ENCODE measurements at regions of chr2 and their contacts with region 1.

Region 1: GRCh38 chr2:36568516-36569246 is 29.3 kb downstream of the FEZ2 start:
- DNase-seq: peak; percentile 95
- H3K4me3 ChIP-seq: peak overlapping the region in 1 of 3 experiments; percentile 42
- H3K27ac ChIP-seq: peak overlapping the region; percentile 98
- H3K4me1 ChIP-seq: peaks cover 91% of the 10 kb centered on the region
- H3K27me3 ChIP-seq: no peaks in the 10 kb centered on the region
- CTCF ChIP-seq: no peak
- POLR2A ChIP-seq: peak; percentile 61

Region 2: DNA sequence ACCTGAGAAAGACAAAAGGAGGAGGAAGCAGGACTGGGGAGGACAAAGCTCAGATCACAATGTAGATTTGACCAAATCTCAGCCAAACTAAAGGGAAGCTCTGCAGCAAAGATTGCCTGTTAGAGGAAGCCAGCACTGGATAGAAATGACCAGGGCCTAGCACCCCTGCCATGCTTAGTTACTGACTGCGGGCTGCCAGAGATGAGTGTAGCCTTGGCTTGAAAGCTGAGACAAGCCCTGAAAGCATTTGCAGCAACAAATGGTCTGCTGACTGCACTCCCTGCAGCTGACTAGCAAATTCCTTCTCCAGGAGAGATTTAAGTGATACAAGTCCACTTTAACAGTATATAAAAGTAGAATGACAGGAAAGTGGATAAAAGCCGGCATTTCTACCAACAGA is 354.0 kb before region 1 on chr2:
- CTCF ChIA-PET with region 1: no interaction called
- POLR2A ChIA-PET with region 1: no interaction called
- dilution Hi-C with region 1: no loop called
- intact Hi-C with region 1: no loop called
- DNase-seq: no peak
- H3K4me3 ChIP-seq: no peak overlapping the region
- H3K27ac ChIP-seq: no peak overlapping the region
- H3K4me1 ChIP-seq: no peaks in the 10 kb centered on the region
- H3K27me3 ChIP-seq: peaks cover 0 to 2% of the 10 kb centered on the region in 2 experiments
- CTCF ChIP-seq: no peak
- POLR2A ChIP-seq: no peak

Region 3: DNA sequence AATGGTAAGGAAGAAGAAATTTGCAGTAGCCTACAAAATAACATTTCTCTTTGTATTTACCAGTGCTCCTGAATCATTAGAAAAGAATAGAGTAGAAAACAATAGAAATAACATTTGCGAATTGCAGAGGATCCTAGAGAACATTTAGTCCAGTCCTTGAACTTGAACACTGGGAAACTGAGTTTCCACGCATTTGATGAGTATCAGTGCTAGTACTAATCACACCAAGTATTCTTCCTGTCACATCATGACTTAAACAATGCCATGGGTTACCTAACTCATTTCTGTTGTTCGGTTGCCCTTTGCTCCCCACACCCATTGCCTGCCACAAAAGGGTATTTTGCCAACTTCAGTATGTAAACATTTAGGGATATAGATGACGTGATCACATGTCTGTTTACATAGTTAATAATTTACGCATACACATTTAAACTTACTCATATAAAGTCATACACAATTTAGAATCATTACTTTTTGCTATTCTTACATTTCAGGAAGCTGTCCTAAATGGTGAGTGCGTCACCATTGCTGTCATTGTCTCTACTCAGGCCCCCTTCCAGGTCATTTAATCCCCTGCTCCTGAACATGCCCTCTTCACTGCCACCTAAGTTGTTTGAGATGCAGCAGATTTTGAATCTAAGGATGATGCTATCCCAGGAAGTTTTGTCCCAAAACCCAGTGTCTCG is 170.8 kb before region 1 on chr2:
- CTCF ChIA-PET with region 1: no interaction called
- POLR2A ChIA-PET with region 1: no interaction called
- dilution Hi-C with region 1: no loop called
- intact Hi-C with region 1: no loop called
- DNase-seq: no peak
- H3K4me3 ChIP-seq: no peak overlapping the region
- H3K27ac ChIP-seq: peak overlapping the region; percentile 70
- H3K4me1 ChIP-seq: peaks cover 93% of the 10 kb centered on the region
- H3K27me3 ChIP-seq: no peaks in the 10 kb centered on the region
- CTCF ChIP-seq: no peak
- POLR2A ChIP-seq: peak; percentile 55

Region 4: DNA sequence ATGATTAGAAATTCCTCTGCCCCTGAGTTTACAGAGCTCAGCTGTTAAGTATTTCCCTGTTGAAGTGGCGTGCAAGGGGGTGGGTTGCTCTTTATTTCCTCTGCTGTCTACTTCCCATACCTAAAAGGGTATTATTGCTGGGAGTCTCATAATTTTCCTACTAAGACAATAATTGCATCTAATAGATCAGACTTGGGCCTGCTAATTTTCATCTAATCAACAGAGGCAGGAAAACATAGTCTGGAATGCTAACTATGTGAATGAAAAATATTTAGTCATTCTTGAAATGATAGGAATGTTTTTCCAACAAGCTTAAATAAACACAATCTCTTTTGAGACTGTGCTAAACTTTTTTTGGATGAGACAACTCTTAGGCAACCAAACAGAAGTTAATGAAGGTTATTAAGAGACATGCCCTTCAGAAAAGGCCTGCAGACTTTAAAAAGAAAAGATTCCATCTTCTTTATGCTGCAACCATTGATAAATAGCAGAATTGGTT is 82.1 kb before region 1 on chr2:
- CTCF ChIA-PET with region 1: interaction called, 6 read pairs
- POLR2A ChIA-PET with region 1: interaction called, 7 read pairs
- dilution Hi-C with region 1: no loop called
- intact Hi-C with region 1: loop called (anchors 1 kb)
- DNase-seq: peak; percentile 90
- H3K4me3 ChIP-seq: no peak overlapping the region
- H3K27ac ChIP-seq: peak overlapping the region; percentile 93
- H3K4me1 ChIP-seq: peaks cover 93% of the 10 kb centered on the region
- H3K27me3 ChIP-seq: no peaks in the 10 kb centered on the region
- CTCF ChIP-seq: no peak
- POLR2A ChIP-seq: peak; percentile 43

Region 5: DNA sequence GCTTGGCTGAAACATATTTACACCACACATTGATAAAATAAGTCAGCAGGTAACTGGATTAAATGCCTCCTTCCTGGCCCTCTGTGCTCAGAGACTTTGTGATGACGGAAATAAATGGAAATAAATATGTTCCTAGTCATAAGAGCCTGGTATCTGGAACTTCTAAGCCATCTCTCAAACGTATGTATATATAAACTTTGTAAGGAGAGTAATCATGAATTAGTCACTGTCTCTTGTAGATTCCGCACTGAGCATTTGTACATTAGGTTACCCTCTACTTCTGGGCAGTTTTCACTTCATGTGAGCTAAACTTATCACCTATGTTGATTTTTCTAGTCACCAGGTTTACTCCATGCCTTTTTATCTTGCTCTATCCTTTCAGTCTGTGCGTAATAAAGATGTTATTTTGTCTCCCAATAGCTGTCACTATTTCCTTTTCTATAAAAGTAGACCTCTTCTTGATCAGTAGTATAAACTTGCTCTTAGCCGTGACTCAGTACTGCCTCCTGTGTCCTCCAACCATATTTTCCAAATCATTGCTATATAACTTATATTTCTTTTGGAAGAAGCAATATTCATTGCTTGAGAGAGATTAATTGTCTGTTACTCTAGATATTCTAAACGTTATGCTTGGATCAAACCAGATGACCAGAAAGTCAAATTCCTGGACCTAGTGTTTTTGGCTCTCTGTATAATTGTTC is 23.9 kb before region 1 on chr2:
- CTCF ChIA-PET with region 1: interaction called, 12 read pairs
- POLR2A ChIA-PET with region 1: interaction called, 3 read pairs
- dilution Hi-C with region 1: no loop called
- intact Hi-C with region 1: loop called (anchors 1 kb)
- DNase-seq: no peak
- H3K4me3 ChIP-seq: no peak overlapping the region
- H3K27ac ChIP-seq: peak overlapping the region; percentile 5
- H3K4me1 ChIP-seq: peaks cover 91% of the 10 kb centered on the region
- H3K27me3 ChIP-seq: no peaks in the 10 kb centered on the region
- CTCF ChIP-seq: peak in 1 of 2 donors; percentile 19
- POLR2A ChIP-seq: peak; percentile 62

Region 6: GRCh38 chr2:36597532-36598377 is 29.1 kb after region 1 on chr2 and contains the start of gene FEZ2:
- CTCF ChIA-PET with region 1: interaction called, 8 read pairs
- POLR2A ChIA-PET with region 1: no interaction called
- dilution Hi-C with region 1: no loop called
- intact Hi-C with region 1: loop called (anchors 1 kb)
- DNase-seq: peak; percentile 73
- H3K4me3 ChIP-seq: peak within 1 kb of the TSS; percentile 86 to 98 (median 97)
- H3K27ac ChIP-seq: peak within 1 kb of the TSS; percentile 65
- H3K4me1 ChIP-seq: peaks cover 22% of the 10 kb centered on the region
- H3K27me3 ChIP-seq: no peaks in the 10 kb centered on the region
- CTCF ChIP-seq: no peak
- POLR2A ChIP-seq: peak; percentile 74
- total RNA-seq, gene FEZ2: 72.4 and 73.5 TPM in 2 replicates

Region 7: DNA sequence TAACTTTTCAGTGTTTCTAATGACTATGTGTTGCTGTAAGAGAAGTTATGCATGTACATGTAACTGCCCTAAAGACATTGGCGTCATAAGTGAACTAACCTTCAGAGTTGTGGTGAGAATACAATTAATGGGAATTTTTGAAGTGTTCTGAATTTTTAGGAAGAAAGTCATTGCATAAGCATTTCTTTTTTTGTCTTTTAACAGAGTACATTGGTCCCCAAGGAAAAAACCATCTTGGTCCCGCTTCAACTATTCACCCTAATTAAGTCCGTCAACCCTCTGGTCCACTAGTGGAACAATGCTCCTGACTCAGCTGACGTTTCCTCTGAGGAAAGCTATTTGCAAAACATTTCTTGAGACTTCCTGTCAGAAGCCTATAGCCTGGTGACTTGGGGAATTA is 86.8 kb after region 1 on chr2:
- CTCF ChIA-PET with region 1: interaction called, 3 read pairs
- POLR2A ChIA-PET with region 1: interaction called, 4 read pairs
- dilution Hi-C with region 1: no loop called
- intact Hi-C with region 1: loop called (anchors 1 kb)
- DNase-seq: peak; percentile 89
- H3K4me3 ChIP-seq: no peak overlapping the region
- H3K27ac ChIP-seq: peak overlapping the region; percentile 66
- H3K4me1 ChIP-seq: peaks cover 24% of the 10 kb centered on the region
- H3K27me3 ChIP-seq: no peaks in the 10 kb centered on the region
- CTCF ChIP-seq: no peak
- POLR2A ChIP-seq: no peak

Region 8: DNA sequence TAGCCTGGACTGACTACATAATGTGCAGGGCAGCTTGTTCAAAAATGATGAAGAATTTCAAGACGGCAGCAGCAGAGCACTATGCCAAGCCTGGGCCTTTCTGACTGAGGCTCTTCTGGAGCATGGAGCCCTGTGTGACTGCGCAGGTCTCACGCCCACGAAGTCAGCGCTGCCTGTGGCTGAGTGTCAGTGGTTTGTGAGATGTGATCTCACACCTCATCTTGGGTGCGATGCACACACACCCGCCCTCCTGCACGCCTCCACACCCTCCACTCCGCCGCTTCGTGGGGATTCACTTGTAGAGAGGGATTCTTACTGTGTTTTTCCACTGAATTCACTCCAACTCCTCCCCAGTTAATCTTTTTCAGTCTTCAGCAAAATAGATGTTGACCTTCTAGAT is 231.7 kb after region 1 on chr2:
- CTCF ChIA-PET with region 1: no interaction called
- POLR2A ChIA-PET with region 1: no interaction called
- dilution Hi-C with region 1: no loop called
- intact Hi-C with region 1: no loop called
- DNase-seq: no peak
- H3K4me3 ChIP-seq: no peak overlapping the region
- H3K27ac ChIP-seq: no peak overlapping the region
- H3K4me1 ChIP-seq: no peaks in the 10 kb centered on the region
- H3K27me3 ChIP-seq: peaks cover 9 to 25% of the 10 kb centered on the region in 2 experiments
- CTCF ChIP-seq: no peak
- POLR2A ChIP-seq: no peak

Region 9: DNA sequence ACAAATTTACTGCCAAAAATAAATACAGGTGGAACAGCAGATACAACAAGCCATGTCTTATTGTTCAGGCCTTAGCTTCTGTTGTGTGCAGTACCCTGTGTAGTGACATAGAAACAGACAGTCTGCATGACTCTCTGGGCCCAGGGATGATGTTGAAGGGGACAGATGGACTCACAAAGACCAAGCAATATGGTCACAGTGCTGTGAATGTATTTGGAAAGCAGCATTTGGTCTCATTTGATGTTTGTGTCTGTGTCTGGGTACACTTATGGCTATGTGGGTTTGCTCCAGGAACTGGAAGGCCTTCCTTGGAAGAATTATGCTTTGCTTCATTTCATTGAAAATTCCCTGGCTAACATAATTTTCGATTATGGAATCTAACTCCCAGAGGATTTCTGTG is 944.3 kb after region 1 on chr2:
- CTCF ChIA-PET with region 1: no interaction called
- POLR2A ChIA-PET with region 1: no interaction called
- dilution Hi-C with region 1: no loop called
- intact Hi-C with region 1: no loop called
- DNase-seq: no peak
- H3K4me3 ChIP-seq: no peak overlapping the region
- H3K27ac ChIP-seq: no peak overlapping the region
- H3K4me1 ChIP-seq: no peaks in the 10 kb centered on the region
- H3K27me3 ChIP-seq: no peaks in the 10 kb centered on the region
- CTCF ChIP-seq: no peak
- POLR2A ChIP-seq: no peak

Measured in endothelial cell of umbilical vein (primary cell).